Activated B cell treated with CpG ODN at 0.5 μM for 24 hours (primary cell): ENCODE measurements at regions of chr7 and their contacts with region 1.

Region 1: GRCh38 chr7:151876899-151877777 is at the start of gene PRKAG2:
- DNase-seq: peak; percentile 75
- ATAC-seq: peak; percentile 60
- H3K4me3 Mint-ChIP-seq: peak within 1 kb of the TSS; percentile 97
- H3K27ac Mint-ChIP-seq: peak within 1 kb of the TSS; percentile 91
- H3K4me1 Mint-ChIP-seq: peaks cover 15% of the 10 kb centered on the region
- H3K27me3 Mint-ChIP-seq: no peaks in the 10 kb centered on the region
- CTCF ChIP-seq: no peak
- total RNA-seq, gene PRKAG2: 19.7 TPM in 2 replicates

Region 2: GRCh38 chr7:151519765-151520418 is 357.2 kb before region 1 on chr7 and contains the start of gene RHEB:
- CTCF ChIA-PET with region 1: no interaction called
- POLR2A ChIA-PET with region 1: no interaction called
- intact Hi-C with region 1: loop called (anchors 1 kb)
- DNase-seq: peak; percentile 94
- ATAC-seq: peak; percentile 86
- H3K4me3 Mint-ChIP-seq: peak within 1 kb of the TSS; percentile 94
- H3K27ac Mint-ChIP-seq: peak within 1 kb of the TSS; percentile 98
- H3K4me1 Mint-ChIP-seq: peaks cover 39% of the 10 kb centered on the region
- H3K27me3 Mint-ChIP-seq: no peaks in the 10 kb centered on the region
- CTCF ChIP-seq: no peak
- total RNA-seq, gene RHEB: 30.5 and 32.8 TPM in 2 replicates

Region 3: GRCh38 chr7:151795168-151795811 is 81.8 kb before region 1 on chr7:
- CTCF ChIA-PET with region 1: no interaction called
- POLR2A ChIA-PET with region 1: no interaction called
- intact Hi-C with region 1: loop called (anchors 5 kb)
- DNase-seq: no peak
- ATAC-seq: peak; percentile 80
- H3K4me3 Mint-ChIP-seq: no peak overlapping the region
- H3K27ac Mint-ChIP-seq: peak overlapping the region; percentile 62
- H3K4me1 Mint-ChIP-seq: peaks cover 28% of the 10 kb centered on the region
- H3K27me3 Mint-ChIP-seq: no peaks in the 10 kb centered on the region
- CTCF ChIP-seq: no peak

Region 4: GRCh38 chr7:151925446-151926335 is 48.6 kb after region 1 on chr7:
- CTCF ChIA-PET with region 1: interaction called, 3 read pairs
- POLR2A ChIA-PET with region 1: no interaction called
- intact Hi-C with region 1: loop called (anchors 2 kb)
- DNase-seq: no peak
- ATAC-seq: peak; percentile 58
- H3K4me3 Mint-ChIP-seq: peak overlapping the region; percentile 72
- H3K27ac Mint-ChIP-seq: peak overlapping the region; percentile 76
- H3K4me1 Mint-ChIP-seq: peaks cover 11% of the 10 kb centered on the region
- H3K27me3 Mint-ChIP-seq: peaks cover 17% of the 10 kb centered on the region
- CTCF ChIP-seq: no peak

Region 5: DNA sequence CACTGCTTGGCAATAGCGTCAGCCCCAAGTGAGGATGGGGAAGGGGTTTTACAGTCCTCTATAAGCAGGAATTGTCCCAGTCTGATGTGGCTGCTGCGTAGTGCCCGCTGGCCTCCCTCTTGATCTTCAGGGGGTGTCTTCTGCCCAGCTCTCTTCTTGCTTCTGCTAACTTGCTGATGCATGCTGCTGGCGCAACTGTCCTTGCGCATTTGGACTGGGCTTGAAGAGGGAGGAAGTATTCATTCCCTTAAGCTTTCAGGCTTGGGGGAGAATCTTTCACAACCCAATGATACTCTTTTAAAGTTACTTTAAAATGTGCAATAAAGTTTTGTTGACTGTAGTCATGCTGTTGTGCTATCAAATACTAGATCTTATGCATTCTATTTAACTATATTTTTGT is 158.7 kb after region 1 on chr7:
- CTCF ChIA-PET with region 1: no interaction called
- POLR2A ChIA-PET with region 1: no interaction called
- intact Hi-C with region 1: no loop called
- DNase-seq: no peak
- ATAC-seq: no peak
- H3K4me3 Mint-ChIP-seq: no peak overlapping the region
- H3K27ac Mint-ChIP-seq: no peak overlapping the region
- H3K4me1 Mint-ChIP-seq: peaks cover 2% of the 10 kb centered on the region
- H3K27me3 Mint-ChIP-seq: no peaks in the 10 kb centered on the region
- CTCF ChIP-seq: no peak

Region 6: DNA sequence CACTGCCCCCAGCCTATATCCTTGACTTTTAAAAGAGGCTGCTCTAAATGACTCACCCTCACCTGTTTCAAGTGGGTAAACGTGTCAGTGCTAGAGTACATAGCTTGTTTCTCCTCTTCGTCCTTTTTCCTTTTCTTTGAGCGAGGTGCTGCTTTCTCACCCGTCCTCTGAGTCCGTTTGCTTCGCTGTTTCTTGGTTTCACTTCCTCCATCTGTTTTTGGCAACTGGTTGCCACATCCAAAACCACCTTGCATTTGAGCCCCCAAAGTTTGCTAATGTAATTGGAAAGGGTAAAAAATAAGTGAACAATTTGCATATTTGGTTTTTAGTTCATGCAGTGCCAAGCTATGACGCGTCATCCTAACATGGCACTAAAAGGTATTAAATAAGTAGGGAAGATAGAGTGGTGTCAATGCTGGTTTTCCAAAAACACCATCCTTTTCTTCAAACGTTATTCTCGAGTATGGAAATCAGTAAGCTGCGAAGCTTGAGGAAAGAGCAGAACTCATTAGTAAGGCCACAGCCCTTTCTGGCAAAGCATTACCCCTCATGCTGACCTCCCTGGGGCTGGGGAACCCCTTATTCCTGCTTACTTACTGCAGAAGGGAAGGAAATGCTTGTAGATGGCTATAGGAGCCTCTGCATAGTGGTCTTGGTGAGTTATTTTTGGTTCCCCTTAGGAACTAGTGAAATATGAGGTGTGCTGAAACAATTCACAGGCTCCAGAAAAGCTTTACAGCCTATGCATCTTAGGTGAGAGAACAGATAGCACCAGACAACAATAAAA is 281.9 kb after region 1 on chr7:
- CTCF ChIA-PET with region 1: no interaction called
- POLR2A ChIA-PET with region 1: no interaction called
- intact Hi-C with region 1: loop called (anchors 5 kb)
- DNase-seq: peak; percentile 34
- ATAC-seq: peak; percentile 86
- H3K4me3 Mint-ChIP-seq: peak overlapping the region; percentile 39
- H3K27ac Mint-ChIP-seq: peak overlapping the region; percentile 83
- H3K4me1 Mint-ChIP-seq: peaks cover 41% of the 10 kb centered on the region
- H3K27me3 Mint-ChIP-seq: no peaks in the 10 kb centered on the region
- CTCF ChIP-seq: no peak